Sciatic nerve (tissue), 2 donors: ENCODE measurements at regions of chr5 and their contacts with region 1.

Region 1: GRCh38 chr5:84411831-84412605 is 27.3 kb upstream of the EDIL3 start:
- DNase-seq: no peak
- ATAC-seq: no peak

Region 2: GRCh38 chr5:84382363-84383295 is 29.4 kb before region 1 on chr5:
- intact Hi-C with region 1: no loop called
- DNase-seq: peak; percentile 64
- ATAC-seq: peak; percentile 70

Region 3: GRCh38 chr5:84445049-84445685 is 33.1 kb after region 1 on chr5:
- intact Hi-C with region 1: loop called (anchors 1 kb)
- DNase-seq: no peak
- ATAC-seq: no peak